Psoas muscle (tissue), 8 donors: ENCODE measurements at regions of chr2 and their contacts with region 1.

Region 1: DNA sequence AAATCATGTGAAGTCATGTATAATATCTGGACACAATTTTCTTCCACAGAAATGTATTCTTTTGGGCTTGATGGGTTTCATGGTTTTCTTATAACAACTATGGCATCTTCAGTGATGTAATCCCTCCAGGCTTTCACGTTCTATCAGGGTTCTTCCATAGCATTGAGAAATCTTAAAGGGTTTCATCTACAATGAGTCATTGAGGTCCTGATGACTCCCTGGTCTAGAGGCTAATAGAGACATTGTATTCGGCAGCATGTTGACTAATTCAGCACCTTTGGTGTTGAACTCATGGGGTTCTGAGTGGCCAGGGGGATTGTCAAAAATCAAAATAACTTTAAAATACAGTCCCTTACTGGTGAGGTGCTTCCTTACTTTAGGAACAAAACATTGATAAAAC is 614.0 kb upstream of the CRIM1 start:
- DNase-seq: no peak
- ATAC-seq: no peak
- H3K4me3 ChIP-seq: no peak overlapping the region
- H3K27ac ChIP-seq: no peak overlapping the region
- H3K4me1 ChIP-seq: no peaks in the 10 kb centered on the region
- H3K27me3 ChIP-seq: no peaks in the 10 kb centered on the region
- CTCF ChIP-seq: no peak

Region 2: GRCh38 chr2:35365859-35366258 is 375.7 kb before region 1 on chr2:
- intact Hi-C with region 1: no loop called
- DNase-seq: no peak
- ATAC-seq: no peak
- H3K4me3 ChIP-seq: no peak overlapping the region
- H3K27ac ChIP-seq: no peak overlapping the region
- H3K4me1 ChIP-seq: no peaks in the 10 kb centered on the region
- H3K27me3 ChIP-seq: no peaks in the 10 kb centered on the region
- CTCF ChIP-seq: no peak

Region 3: GRCh38 chr2:35783725-35784124 is 42.2 kb after region 1 on chr2:
- intact Hi-C with region 1: loop called in 1 of 2 experiments (anchors 5 kb)
- DNase-seq: no peak
- ATAC-seq: no peak
- H3K4me3 ChIP-seq: no peak overlapping the region
- H3K27ac ChIP-seq: no peak overlapping the region
- H3K4me1 ChIP-seq: no peaks in the 10 kb centered on the region
- H3K27me3 ChIP-seq: no peaks in the 10 kb centered on the region
- CTCF ChIP-seq: no peak